HEK293T (cell line): ENCODE measurements at regions of chr20 and their contacts with region 1.

Region 1: DNA sequence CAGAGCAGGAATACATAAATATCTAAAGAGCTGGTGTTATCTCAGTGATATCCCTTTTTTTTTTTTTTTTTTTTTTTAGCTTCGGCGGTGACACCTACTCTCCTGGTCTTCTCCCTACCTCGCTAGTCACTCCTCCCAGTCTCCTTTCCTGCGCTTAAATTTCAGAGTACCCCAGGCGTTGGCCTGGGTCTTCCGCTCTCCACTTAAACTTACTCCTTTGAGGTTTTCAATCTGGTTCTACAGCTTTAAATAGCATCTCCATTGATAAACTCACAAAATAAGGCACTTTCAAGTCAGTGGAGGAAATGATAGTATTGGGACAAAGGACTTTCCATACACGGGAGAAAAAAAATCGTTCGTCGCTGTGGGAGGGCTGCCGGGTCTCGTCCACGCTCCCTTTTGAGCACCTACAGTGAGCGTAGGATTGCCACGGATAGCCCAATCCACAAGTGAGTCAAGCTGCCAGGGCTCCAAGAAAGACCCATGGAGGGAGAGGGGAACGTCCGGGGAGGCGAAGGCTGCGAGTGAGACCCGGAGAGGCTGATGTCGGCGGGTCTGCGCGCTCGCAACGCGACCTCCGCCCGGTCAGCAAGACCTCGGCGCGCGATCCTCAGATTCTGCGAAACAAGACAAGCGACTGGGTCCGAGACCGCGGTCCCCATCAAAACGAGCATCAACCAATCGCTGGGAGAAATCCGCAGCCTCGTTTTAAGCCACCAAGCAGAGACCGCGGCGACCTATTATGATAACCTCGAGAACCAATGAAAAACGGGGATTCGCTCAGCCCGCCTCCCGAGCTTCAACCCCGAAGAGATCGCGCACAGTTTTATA is 672 bp upstream of the SRSF6 start:
- DNase-seq: peak; percentile 85

Region 2: DNA sequence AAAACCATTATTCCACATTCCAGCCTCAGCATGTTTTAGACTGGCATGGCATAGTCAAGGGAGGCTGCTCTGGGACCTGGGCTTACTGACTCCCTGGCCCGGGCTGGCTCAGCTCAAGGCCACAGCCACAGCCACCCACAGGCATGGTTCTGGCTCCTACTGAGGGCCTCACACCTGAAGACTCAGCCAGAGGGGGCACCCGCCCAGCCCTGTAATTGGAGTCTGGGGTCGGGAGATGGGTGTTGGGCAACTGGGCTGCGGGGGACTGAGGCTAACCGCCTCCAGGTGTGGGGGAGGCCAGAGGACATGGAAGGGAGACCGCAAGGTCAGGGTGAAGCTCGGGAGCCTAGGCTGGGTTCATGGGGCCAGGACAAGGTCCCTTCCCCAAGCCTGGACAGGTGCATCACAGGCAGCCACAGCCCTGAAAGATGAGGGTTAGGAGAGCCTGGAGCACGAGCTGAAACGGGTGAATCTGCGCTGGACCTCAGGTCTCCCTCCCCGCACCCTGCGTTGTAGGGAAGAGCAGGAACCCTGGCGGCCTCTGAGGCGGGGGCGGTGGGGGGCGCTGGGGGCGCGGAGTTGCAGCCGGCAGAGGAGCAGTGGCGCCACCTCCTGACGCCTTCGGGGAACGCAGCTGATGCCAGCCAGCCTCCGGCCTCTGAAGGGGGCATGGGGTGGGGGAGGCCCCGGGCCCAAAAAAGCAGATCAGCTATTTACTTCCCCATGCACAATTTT is 67.0 kb before region 1 on chr20:
- CTCF ChIA-PET with region 1: no interaction called
- POLR2A ChIA-PET with region 1: no interaction called
- DNase-seq: peak; percentile 51

Region 3: DNA sequence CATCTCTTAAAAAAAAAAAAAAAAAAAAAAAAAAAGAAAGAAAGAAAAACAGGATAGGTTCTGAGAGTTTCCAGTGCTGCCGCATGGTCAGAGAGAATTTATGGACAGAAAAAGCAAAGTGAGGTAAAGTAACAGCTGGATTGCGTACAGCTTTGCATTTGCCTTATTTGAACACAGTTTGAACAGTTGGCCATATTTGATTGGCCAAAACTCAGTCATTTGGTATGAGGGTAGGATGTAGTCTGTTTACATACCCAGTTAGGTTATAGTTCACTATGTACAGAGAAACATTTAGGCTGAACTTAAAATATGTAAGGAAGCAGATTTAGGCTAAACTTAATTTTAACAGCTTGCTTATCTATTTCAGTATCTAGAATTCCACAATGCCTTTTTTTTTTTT is 33.0 kb after region 1 on chr20:
- CTCF ChIA-PET with region 1: no interaction called
- POLR2A ChIA-PET with region 1: interaction called, 14 read pairs
- DNase-seq: no peak

Region 4: GRCh38 chr20:43507150-43508080 is 50.4 kb after region 1 on chr20 and contains the start of gene L3MBTL1:
- CTCF ChIA-PET with region 1: no interaction called
- POLR2A ChIA-PET with region 1: interaction called, 16 read pairs
- DNase-seq: peak; percentile 68

Region 5: DNA sequence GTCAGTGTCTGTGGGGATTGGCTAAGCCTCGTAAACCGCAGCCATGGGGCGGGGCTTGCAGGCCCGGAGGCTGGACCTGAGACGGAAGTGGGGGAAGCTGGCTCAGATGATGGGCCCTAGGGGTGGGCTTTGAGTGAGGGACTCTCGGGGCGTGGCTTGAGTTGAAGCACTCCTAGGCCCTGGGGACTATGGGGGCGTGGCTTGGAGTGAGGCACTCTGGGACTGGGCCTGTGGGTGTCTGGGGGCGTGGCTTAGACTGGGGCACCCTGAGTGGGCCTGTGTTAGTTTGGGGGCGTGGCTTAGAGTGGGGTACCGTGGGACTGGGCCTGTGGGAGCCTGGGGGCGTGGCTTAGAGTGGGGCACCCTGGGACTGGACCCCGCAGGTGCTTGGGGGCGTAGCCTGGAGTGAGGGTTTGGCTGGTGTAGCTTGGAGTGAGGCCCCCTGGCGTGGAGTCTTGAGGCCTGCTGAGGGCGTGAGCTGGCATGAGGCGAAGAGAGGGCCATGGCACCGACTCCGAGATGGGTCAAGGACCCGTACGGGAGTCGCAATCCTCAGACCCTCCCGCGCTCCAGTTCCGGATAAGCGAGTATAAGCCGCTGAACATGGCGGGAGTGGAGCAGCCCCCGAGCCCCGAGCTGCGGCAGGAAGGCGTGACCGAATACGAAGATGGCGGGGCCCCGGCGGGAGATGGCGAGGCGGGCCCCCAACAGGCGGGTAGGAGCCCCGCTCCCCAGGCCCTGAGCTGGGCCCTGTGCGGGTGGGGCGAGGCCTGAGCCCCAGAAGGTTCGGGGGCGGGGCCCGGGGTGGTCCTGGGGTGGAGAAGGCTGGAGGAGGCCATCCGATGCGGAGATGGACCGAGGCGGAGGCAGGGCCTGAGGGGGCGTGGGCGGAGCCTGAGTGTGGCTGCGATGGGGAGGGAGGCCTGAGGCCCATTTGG is 57.3 kb after region 1 on chr20:
- CTCF ChIA-PET with region 1: no interaction called
- POLR2A ChIA-PET with region 1: interaction called, 35 read pairs
- DNase-seq: peak; percentile 97